H1 (cell line): ENCODE measurements at regions of chr2 and their contacts with region 1.

Region 1: DNA sequence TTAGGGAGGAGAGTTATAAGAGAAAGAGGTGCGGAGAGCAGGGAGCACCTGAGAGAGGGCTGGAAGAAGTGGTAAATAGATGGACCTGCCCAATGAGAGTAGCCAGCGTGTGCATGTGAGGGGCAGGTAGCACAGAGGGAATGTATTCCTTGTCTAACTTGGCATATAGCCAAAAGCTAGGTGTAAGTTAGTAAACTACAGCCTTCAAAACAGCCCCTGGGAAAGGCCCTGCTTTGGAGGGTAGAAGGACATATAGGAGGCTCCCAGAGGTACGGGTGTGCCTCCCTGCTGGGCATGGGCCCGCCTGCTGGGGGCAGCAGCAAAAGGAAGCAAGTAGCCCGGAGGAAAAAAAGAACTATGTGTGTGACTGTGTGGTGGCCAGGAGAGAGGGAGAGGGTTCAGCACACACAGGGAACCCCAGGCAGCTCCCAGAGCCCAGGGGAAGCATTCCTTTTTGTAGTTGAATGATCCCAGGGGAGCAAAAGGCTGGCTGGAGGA is 48.0 kb downstream of the TCF7L1 start:
- DNase-seq: no peak
- H3K4me3 ChIP-seq: no peak overlapping the region
- H3K27ac ChIP-seq: no peak overlapping the region
- H3K4me1 ChIP-seq: peaks cover 26 to 45% (median 29%) of the 10 kb centered on the region in 4 experiments
- H3K27me3 ChIP-seq: no peaks in the 10 kb centered on the region
- CTCF ChIP-seq: peak in 2 of 3 experiments; percentile 3 to 28; a peak in 3 of 4 replicates
- EP300 ChIP-seq: no peak
- POLR2A ChIP-seq: no peak
- RAD21 ChIP-seq: no peak

Region 2: GRCh38 chr2:85162746-85163301 is 18.4 kb before region 1 on chr2:
- CTCF ChIA-PET with region 1: interaction called, 46 read pairs
- POLR2A ChIA-PET with region 1: interaction called, 13 read pairs
- DNase-seq: no peak
- H3K4me3 ChIP-seq: no peak overlapping the region
- H3K27ac ChIP-seq: no peak overlapping the region
- H3K4me1 ChIP-seq: peaks cover 15 to 46% (median 29%) of the 10 kb centered on the region in 4 experiments
- H3K27me3 ChIP-seq: no peaks in the 10 kb centered on the region; a peak in 1 of 7 replicates
- CTCF ChIP-seq: no peak
- EP300 ChIP-seq: no peak
- POLR2A ChIP-seq: no peak
- RAD21 ChIP-seq: no peak

Region 3: GRCh38 chr2:85215448-85216401 is 34.5 kb after region 1 on chr2:
- CTCF ChIA-PET with region 1: interaction called, 44 read pairs
- POLR2A ChIA-PET with region 1: interaction called, 3 read pairs
- DNase-seq: no peak
- H3K4me3 ChIP-seq: peak overlapping the region in 1 of 4 experiments; percentile 39; a peak in 2 of 8 replicates
- H3K27ac ChIP-seq: peak overlapping the region; percentile 62
- H3K4me1 ChIP-seq: peaks cover 22 to 41% (median 27%) of the 10 kb centered on the region in 4 experiments
- H3K27me3 ChIP-seq: no peaks in the 10 kb centered on the region
- CTCF ChIP-seq: no peak
- EP300 ChIP-seq: 0 out of 3 replicates have a peak, but pooled peaks of 1 of the 2 experiments have one; percentile 42
- POLR2A ChIP-seq: no peak
- RAD21 ChIP-seq: no peak

Region 4: DNA sequence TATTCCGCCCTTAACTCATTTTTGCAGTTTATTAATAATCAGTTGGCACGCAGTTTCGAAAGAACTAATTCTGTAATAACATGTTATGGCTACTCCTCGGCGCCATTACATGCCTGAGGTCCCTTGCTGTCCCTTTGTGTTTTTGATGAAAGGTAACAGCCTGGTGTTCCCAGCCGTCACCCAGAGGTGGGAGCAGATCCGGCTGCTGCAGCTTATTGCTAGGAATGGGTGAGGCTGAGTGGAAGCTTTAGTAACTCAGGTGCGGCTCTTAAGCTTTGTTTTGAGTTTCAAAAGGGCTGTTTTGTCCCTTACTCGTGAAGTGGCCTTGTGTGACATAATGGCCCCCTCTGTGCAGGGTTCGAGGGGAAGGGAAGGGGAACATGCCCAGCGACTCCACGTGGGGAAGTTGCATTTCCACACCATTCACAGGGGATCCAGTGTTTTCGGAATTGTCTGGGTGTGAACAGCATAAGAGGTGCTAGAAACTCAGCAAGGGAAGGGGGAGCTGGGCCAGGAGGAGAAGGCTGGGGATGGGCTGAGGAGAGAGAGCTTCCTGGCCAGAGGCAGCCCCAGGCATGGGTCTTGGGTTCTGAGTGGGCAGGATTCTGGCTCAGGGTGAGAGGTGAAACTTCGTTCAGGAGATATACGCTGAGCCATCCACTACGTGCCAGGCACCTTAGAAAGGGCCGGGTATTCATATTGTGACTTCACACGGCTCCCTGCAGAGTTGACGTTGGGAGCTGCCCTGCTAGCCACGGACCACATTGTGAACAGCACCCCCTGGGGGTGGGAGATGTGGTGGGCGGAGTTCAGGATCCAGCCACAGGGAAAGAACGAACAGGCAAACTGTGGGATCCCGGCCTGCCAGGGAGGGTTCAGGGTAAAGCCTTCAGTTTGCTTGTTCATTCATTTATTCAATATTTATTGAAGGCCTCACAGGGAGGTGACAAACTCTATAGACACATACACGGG is 62.2 kb after region 1 on chr2:
- CTCF ChIA-PET with region 1: interaction called, 218 read pairs
- POLR2A ChIA-PET with region 1: interaction called, 3 read pairs
- DNase-seq: peak in 1 of 2 experiments; percentile 83
- H3K4me3 ChIP-seq: no peak overlapping the region
- H3K27ac ChIP-seq: peak overlapping the region; percentile 1; the same call in 1 of the 2 replicates
- H3K4me1 ChIP-seq: peaks cover 24 to 50% (median 37%) of the 10 kb centered on the region in 4 experiments
- H3K27me3 ChIP-seq: no peaks in the 10 kb centered on the region
- CTCF ChIP-seq: peak; percentile 70 to 78 (median 74)
- EP300 ChIP-seq: no peak
- POLR2A ChIP-seq: no peak
- RAD21 ChIP-seq: peak; percentile 57 to 71

Region 5: DNA sequence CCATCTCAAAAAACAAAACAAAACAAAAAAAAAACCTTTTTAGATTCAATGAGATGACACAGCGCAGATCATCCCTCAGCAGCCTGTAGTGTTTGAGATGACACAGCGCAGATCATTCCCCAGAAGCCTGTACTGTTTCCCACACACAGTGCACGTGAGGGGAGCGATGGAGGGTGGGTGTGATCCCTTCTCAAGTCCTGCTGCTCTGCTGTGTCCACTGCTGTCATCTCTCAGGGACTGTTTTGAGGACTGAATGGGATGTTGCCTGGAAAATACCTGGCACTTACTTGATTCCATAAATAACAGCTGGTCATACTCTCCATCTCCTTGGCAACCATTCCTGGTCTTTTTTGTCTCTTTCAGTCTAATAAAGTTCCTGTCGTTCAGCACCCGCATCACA is 120.9 kb after region 1 on chr2:
- CTCF ChIA-PET with region 1: interaction called, 29 read pairs
- POLR2A ChIA-PET with region 1: no interaction called
- DNase-seq: no peak
- H3K4me3 ChIP-seq: no peak overlapping the region
- H3K27ac ChIP-seq: no peak overlapping the region
- H3K4me1 ChIP-seq: 0 out of 7 replicates have a peak, but pooled peaks cover 0 to 2% (median 0%) of the 10 kb centered on the region in 4 experiments
- H3K27me3 ChIP-seq: no peaks in the 10 kb centered on the region
- CTCF ChIP-seq: no peak
- EP300 ChIP-seq: no peak
- POLR2A ChIP-seq: no peak
- RAD21 ChIP-seq: no peak

Region 6: GRCh38 chr2:85409845-85410583 is 228.8 kb after region 1 on chr2 and contains the start of gene CAPG:
- CTCF ChIA-PET with region 1: no interaction called
- POLR2A ChIA-PET with region 1: no interaction called
- DNase-seq: peak in 1 of 2 experiments; percentile 53
- H3K4me3 ChIP-seq: peak within 1 kb of the TSS in 1 of 4 experiments; percentile 28; a peak in 1 of 8 replicates
- H3K27ac ChIP-seq: no peak within 1 kb of the TSS
- H3K4me1 ChIP-seq: peaks cover 5 to 19% (median 15%) of the 10 kb centered on the region in 4 experiments
- H3K27me3 ChIP-seq: peaks cover 0 to 3% (median 1%) of the 10 kb centered on the region in 4 experiments; a peak in 1 of 7 replicates
- CTCF ChIP-seq: no peak
- EP300 ChIP-seq: no peak
- POLR2A ChIP-seq: no peak
- RAD21 ChIP-seq: no peak
- total RNA-seq, gene CAPG: 78.6 and 80.5 TPM in 2 replicates